ENCODE measurements at regions of chrX and their contacts with region 1.

Region 1: GRCh38 chrX:136555694-136556093 is 23.7 kb downstream of the VGLL1 start:
- DNase-seq: no peak
- ATAC-seq: no peak
- H3K4me3 Mint-ChIP-seq: no peak overlapping the region
- H3K27ac Mint-ChIP-seq: no peak overlapping the region
- H3K4me1 Mint-ChIP-seq: no peaks in the 10 kb centered on the region
- H3K27me3 Mint-ChIP-seq: no peaks in the 10 kb centered on the region

Region 2: DNA sequence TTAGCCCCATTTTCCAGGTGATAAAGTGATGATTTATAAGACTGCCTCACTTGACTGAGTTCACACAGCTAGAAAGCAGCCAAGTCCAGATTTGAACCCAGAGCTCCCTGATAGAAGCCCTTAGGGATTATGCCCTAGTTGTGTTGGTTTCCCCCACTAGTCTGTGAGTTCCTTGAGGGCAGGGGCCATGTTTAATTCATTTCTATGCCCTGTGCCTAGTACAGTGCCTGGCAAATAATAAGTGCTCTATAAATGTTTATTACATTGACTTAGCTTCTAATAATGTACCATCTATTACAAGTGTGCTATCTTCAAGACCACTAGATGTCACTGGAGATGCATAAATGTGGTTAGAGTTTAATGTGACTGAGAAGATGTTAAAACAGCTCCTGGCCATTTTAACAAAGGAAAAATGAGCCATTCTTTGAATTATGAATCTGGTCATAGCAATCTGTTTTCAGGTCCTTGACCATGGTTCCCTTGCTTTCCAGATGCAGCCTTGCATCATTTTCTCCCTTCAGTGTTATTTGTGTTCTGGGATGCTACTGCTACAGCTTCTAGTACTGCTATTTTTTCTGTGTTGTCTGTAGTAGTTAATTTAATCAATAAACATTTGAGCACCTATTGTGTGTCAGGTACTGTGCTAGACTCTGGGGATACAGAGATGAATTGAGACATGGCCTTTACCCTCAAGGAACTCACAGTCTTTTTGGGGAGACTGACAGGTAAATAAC is 527.3 kb before region 1 on chrX:
- CTCF ChIA-PET with region 1: no interaction called
- POLR2A ChIA-PET with region 1: no interaction called
- intact Hi-C with region 1: no loop called
- DNase-seq: no peak
- ATAC-seq: no peak
- H3K4me3 Mint-ChIP-seq: no peak overlapping the region
- H3K27ac Mint-ChIP-seq: no peak overlapping the region
- H3K4me1 Mint-ChIP-seq: no peaks in the 10 kb centered on the region
- H3K27me3 Mint-ChIP-seq: no peaks in the 10 kb centered on the region

Region 3: DNA sequence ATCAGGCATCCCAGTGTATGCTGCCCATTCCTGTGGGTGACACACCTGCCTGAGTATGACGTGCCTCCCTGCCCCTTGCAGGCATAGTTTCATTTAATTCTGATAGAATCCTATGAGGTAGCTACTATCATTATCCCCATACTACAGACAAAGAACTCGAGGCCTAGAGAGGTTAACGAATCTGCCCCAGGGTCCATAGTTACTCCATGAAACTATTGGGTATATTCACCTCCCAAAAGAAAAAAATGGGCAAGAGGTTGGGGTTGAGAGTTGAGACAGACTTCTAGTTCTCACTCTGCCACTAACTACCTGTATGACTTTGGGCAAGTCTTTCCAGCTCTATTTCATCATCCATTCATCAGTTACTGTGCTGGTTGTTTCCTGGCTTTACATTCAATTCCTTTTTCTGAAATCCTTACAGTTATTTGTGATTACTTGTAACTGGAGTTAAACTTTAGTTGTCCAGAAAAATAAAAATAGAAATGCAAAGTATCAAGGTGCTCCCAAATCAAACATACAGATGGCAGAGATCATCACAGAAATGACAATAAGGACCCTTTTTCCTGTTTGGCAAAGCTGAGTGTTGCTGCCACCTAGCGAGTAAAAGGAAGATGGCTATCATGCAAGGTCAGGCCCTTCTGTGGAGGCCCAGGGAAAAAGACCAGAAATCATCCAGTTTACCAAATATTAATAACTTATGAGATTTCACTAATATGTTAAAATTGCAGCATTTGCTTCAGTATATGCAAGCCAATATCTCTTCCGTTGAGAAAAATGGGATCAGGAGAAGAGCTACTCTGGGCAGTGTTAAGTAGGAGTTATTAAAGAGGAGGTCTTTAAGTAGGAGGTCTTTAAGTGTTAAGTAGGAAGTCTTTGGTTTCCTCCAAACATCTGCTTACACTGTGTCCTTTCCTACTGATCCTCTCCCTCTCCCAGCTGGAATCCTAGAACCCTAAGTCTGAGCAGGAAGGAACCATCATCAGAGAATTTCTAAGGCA is 287.3 kb before region 1 on chrX:
- CTCF ChIA-PET with region 1: no interaction called
- POLR2A ChIA-PET with region 1: no interaction called
- intact Hi-C with region 1: no loop called
- DNase-seq: peak; percentile 59
- ATAC-seq: peak; percentile 68
- H3K4me3 Mint-ChIP-seq: no peak overlapping the region
- H3K27ac Mint-ChIP-seq: no peak overlapping the region
- H3K4me1 Mint-ChIP-seq: peaks cover 4% of the 10 kb centered on the region
- H3K27me3 Mint-ChIP-seq: no peaks in the 10 kb centered on the region

Region 4: DNA sequence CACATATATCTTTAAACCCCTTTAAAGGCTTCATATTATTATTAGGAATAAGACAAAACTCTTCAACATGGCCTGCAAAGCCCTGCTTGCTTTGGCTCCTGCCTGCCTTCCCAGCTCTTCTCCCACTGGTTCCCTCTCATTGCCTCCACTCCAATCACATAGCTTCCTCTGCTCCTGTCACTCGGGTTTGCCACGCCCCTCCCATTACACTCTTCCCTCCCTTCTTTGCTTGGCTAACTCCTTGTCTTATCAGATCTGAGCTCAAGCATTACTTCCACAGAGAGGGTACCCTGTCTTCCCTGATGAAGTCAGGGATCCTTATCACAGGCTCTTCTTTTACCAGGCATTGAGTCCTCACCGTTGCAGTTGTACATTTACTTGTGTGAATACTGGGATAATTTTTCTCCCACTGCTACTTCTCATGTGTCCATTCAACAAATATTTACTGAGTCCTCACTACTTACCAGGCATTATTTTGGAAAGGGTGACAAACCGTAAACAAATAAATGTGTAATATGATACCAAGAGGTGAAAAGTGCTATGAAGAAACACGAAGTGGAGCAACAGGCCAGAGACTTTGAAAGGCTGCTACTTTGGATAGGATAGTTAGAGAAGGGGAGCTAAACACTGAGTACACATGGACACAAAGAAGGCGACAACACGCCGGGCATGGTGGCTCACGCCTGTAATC is 26.9 kb before region 1 on chrX:
- CTCF ChIA-PET with region 1: no interaction called
- POLR2A ChIA-PET with region 1: no interaction called
- intact Hi-C with region 1: loop called in 1 of 2 experiments (anchors 1 kb)
- DNase-seq: no peak
- ATAC-seq: no peak
- H3K4me3 Mint-ChIP-seq: no peak overlapping the region
- H3K27ac Mint-ChIP-seq: no peak overlapping the region
- H3K4me1 Mint-ChIP-seq: peaks cover 2% of the 10 kb centered on the region
- H3K27me3 Mint-ChIP-seq: peaks cover 2% of the 10 kb centered on the region

Region 5: DNA sequence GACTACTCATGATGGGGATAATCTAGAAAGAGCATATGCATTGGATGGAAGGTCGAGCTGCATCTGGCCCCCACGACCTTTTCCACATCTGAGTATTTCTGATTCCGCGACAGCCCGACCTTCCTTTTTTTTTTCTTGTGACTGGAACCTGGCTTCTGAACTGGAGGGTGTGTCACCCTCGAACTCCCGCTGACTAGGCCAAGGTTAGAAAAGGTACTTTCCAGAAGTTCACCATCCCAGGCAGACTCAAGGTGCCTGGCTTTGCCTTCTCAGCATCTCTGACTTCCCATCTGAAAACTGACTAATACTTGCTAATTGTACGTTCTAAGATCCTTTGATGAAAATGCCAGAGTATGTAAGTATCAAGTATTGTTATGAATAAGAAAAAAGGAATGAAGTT is 42.9 kb after region 1 on chrX:
- CTCF ChIA-PET with region 1: no interaction called
- POLR2A ChIA-PET with region 1: no interaction called
- intact Hi-C with region 1: no loop called
- DNase-seq: peak; percentile 58
- ATAC-seq: peak; percentile 86
- H3K4me3 Mint-ChIP-seq: peak overlapping the region; percentile 35
- H3K27ac Mint-ChIP-seq: peak overlapping the region; percentile 88
- H3K4me1 Mint-ChIP-seq: peaks cover 52% of the 10 kb centered on the region
- H3K27me3 Mint-ChIP-seq: no peaks in the 10 kb centered on the region

Region 6: GRCh38 chrX:136797787-136798186 is 242.1 kb after region 1 on chrX:
- CTCF ChIA-PET with region 1: no interaction called
- POLR2A ChIA-PET with region 1: no interaction called
- intact Hi-C with region 1: no loop called
- DNase-seq: no peak
- ATAC-seq: no peak
- H3K4me3 Mint-ChIP-seq: no peak overlapping the region
- H3K27ac Mint-ChIP-seq: no peak overlapping the region
- H3K4me1 Mint-ChIP-seq: peaks cover 10% of the 10 kb centered on the region
- H3K27me3 Mint-ChIP-seq: no peaks in the 10 kb centered on the region

Measured in activated CD4-positive, alpha-beta T cell treated with anti-CD3 and anti-CD28 coated beads for 36 hours (primary cell).